Endothelial cell of umbilical vein (primary cell): ENCODE measurements at regions of chr3 and their contacts with region 1.

Region 1: DNA sequence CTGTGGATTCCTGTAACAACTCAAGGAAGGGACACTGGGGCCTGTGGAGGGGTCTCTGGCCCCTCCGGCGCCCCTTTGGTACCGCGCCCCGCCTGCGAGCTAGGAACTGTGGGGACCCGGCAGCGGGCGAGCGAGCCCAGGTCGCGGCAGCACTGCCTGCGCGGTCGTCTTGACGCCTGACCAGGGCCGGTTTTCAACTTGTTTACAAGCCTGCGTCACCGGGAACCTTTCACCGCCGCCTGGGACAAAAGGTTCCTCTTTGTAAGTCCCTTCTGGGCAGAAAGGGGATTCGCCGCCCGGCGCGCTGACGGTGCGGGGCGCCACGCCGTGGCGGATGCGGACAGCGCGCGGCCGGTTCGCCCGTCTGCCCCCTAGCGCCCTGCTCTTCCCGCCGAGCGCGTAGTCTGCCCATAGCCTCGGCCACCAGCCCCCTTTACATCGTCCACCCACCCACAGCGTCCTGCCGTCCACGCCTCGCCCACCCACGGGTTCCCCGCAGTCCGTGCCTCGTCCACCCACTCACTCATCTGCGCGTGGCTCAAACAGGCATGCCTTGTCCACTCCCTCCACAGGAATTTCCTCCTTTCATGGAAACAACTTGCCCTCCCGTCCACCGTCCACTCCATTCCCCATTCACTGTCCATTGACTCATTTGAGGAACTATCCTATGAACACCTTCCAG is 5.5 kb upstream of the CFAP100 start:
- DNase-seq: peak; percentile 84
- H3K4me3 ChIP-seq: peak overlapping the region in 1 of 3 experiments; percentile 16
- H3K27ac ChIP-seq: no peak overlapping the region
- H3K4me1 ChIP-seq: no peaks in the 10 kb centered on the region
- H3K27me3 ChIP-seq: peaks cover 13 to 18% of the 10 kb centered on the region in 2 experiments
- CTCF ChIP-seq: peak; percentile 94 to 96
- POLR2A ChIP-seq: no peak

Region 2: DNA sequence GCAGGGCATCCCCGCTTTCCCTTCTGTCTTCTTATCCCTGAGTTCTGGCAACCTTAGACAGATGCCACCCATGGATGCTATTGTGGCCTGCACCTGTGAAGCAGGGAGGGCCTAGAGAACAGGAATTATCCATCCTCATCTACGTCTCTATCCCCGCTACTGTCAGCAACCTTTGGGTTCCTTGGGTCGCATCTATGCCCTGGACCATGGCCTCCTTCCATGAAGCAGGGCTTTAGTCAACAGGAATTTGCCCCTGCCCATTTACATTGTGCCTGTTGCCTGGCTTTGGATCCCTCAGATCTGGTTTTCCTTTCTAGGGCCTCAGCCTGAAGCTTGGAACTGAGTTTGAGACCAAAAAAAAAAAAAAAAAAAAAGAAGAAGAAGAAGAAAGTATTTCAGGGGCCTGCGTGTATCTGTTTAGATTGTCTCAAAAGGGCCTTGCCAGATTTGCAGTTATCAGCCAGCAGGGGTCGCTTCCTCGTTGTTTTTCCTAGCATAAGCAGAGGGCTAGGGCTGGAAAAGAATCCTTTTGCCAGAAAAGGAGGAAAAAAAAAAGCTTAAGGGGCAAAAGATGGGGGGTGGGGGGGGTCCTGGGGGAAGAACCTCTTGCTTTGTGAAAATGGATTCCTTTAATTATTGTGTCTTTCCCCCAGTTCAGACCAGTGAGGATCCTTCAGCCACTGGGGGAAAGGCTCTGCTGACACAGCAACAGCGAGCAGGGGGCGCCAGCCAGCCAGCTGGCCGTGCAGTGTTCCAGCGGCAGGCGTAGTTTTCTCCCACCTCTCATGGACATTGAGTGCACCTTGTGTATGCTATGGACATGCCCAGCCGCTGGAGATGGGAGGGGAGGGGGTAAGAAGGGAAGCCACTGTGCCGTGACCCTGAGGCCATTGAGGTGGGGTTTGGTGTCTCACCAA is 143.2 kb before region 1 on chr3:
- CTCF ChIA-PET with region 1: interaction called, 26 read pairs
- POLR2A ChIA-PET with region 1: no interaction called
- dilution Hi-C with region 1: no loop called
- intact Hi-C with region 1: loop called (anchors 1 kb)
- DNase-seq: peak; percentile 54
- H3K4me3 ChIP-seq: no peak overlapping the region
- H3K27ac ChIP-seq: no peak overlapping the region
- H3K4me1 ChIP-seq: no peaks in the 10 kb centered on the region
- H3K27me3 ChIP-seq: peaks cover 9 to 17% of the 10 kb centered on the region in 2 experiments
- CTCF ChIP-seq: peak; percentile 45 to 51
- POLR2A ChIP-seq: no peak

Region 3: GRCh38 chr3:126259411-126260391 is 129.6 kb before region 1 on chr3:
- CTCF ChIA-PET with region 1: interaction called, 112 read pairs
- POLR2A ChIA-PET with region 1: interaction called, 3 read pairs
- dilution Hi-C with region 1: no loop called
- intact Hi-C with region 1: loop called (anchors 1 kb)
- DNase-seq: peak; percentile 54
- H3K4me3 ChIP-seq: no peak overlapping the region
- H3K27ac ChIP-seq: no peak overlapping the region
- H3K4me1 ChIP-seq: no peaks in the 10 kb centered on the region
- H3K27me3 ChIP-seq: peaks cover 0 to under 1% of the 10 kb centered on the region in 2 experiments
- CTCF ChIP-seq: peak; percentile 86 to 88
- POLR2A ChIP-seq: no peak

Region 4: DNA sequence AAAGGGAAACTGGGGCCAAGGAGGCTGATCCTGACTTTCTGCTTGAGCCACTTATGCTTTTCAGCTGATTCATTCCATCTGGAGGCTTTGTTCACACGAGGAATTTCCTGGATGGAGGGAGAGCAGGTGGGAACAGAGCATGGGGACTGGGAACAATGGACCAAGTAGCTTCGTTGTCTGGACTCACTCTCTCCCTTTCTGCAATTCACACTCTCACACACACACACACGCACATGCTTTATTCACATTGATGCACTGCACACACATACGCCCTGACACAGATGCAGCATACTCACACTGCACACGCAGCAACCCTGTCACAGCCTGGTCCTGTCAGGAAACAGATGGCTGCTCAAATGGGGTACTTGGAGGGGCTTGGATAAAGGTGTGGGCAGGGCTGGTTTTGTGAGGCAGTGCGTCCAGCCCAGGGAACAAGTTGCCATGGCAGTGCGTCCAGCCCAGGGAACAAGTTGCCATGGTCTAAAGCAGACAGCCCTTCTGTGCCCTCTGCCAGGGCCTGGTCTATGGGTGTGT is 295.0 kb after region 1 on chr3:
- CTCF ChIA-PET with region 1: no interaction called
- POLR2A ChIA-PET with region 1: no interaction called
- dilution Hi-C with region 1: no loop called
- intact Hi-C with region 1: no loop called
- DNase-seq: peak; percentile 57
- H3K4me3 ChIP-seq: no peak overlapping the region
- H3K27ac ChIP-seq: no peak overlapping the region
- H3K4me1 ChIP-seq: no peaks in the 10 kb centered on the region
- H3K27me3 ChIP-seq: peaks cover 3 to 7% of the 10 kb centered on the region in 2 experiments
- CTCF ChIP-seq: no peak
- POLR2A ChIP-seq: no peak